HCT116 (cell line): ENCODE measurements at regions of chr3 and their contacts with region 1.

Region 1: GRCh38 chr3:155352900-155353490 is 59.5 kb upstream of the STRIT1 start:
- DNase-seq: peak; percentile 40
- ATAC-seq: peak; percentile 68
- H3K4me3 ChIP-seq: no peak overlapping the region
- H3K27ac ChIP-seq: no peak overlapping the region
- H3K4me1 ChIP-seq: no peaks in the 10 kb centered on the region
- H3K27me3 ChIP-seq: no peaks in the 10 kb centered on the region
- CTCF ChIP-seq: peak; percentile 32 to 65 (median 45); a peak in 3 of 6 replicates
- POLR2A ChIP-seq: no peak
- RAD21 ChIP-seq: peak; percentile 71

Region 2: GRCh38 chr3:153976891-153977554 is 1376.0 kb before region 1 on chr3:
- CTCF ChIA-PET with region 1: no interaction called
- POLR2A ChIA-PET with region 1: no interaction called
- RAD21 ChIA-PET with region 1: no interaction called
- intact Hi-C with region 1: no loop called
- DNase-seq: no peak
- ATAC-seq: no peak
- H3K4me3 ChIP-seq: no peak overlapping the region
- H3K27ac ChIP-seq: no peak overlapping the region
- H3K4me1 ChIP-seq: peaks cover 6 to 11% of the 10 kb centered on the region in 2 experiments; a peak in 3 of 4 replicates
- H3K27me3 ChIP-seq: no peaks in the 10 kb centered on the region
- CTCF ChIP-seq: no peak
- POLR2A ChIP-seq: no peak
- RAD21 ChIP-seq: no peak

Region 3: DNA sequence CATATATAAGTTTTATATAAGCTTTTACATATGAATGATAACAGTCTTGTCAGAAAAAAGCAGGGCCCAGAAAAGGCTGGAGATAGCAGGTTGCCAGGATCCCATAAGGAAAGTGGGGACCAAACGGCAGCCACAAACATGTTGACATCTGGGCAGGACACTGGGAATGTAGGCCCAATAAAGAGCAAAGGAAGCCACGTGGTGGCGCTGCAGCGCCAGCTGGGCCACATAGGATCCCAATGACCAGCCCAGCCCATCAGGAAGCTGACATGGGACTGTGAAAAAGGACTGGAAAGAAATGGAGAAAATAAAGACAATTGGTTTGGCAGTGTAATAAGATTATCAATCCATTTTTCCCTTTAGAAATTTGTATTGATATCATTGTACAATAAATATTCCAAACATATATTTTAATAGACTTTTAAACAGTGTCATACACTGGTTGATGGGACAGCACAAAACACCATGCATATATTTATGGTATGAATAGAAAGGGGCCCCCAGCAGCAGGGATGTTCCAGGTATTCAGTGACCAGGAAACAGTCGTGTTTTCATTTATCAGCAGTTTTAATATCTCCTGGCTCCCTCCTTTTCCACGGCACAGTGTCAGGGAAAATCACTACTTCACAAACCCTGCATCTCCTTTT is 29.5 kb after region 1 on chr3:
- CTCF ChIA-PET with region 1: interaction called, 4 read pairs
- POLR2A ChIA-PET with region 1: no interaction called
- RAD21 ChIA-PET with region 1: no interaction called
- intact Hi-C with region 1: loop called (anchors 2 kb)
- DNase-seq: peak; percentile 63
- ATAC-seq: peak; percentile 100
- H3K4me3 ChIP-seq: no peak overlapping the region
- H3K27ac ChIP-seq: no peak overlapping the region
- H3K4me1 ChIP-seq: no peaks in the 10 kb centered on the region
- H3K27me3 ChIP-seq: no peaks in the 10 kb centered on the region
- CTCF ChIP-seq: peak; percentile 73 to 81 (median 79)
- POLR2A ChIP-seq: no peak
- RAD21 ChIP-seq: peak; percentile 91

Region 4: DNA sequence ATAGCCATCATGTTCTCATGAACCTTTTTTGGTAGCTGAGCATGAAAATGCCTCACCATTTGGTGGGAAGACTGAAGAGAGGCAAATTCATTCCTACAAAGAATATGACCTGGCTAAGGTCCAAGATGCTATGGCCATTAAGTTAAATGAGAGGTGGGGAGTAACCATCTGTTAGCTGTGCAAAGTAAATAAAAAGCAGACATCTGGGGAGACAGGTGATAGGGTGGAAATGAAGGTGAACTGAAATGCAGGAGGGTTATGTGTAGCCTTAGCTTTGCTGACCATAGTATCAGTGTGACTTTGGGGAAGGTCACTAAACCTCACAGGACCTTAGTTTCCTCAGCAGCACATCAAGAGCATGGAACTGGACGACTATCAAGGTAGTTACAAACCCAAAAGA is 51.5 kb after region 1 on chr3:
- CTCF ChIA-PET with region 1: no interaction called
- POLR2A ChIA-PET with region 1: no interaction called
- RAD21 ChIA-PET with region 1: no interaction called
- intact Hi-C with region 1: no loop called
- DNase-seq: no peak
- ATAC-seq: no peak
- H3K4me3 ChIP-seq: no peak overlapping the region
- H3K27ac ChIP-seq: no peak overlapping the region
- H3K4me1 ChIP-seq: no peaks in the 10 kb centered on the region
- H3K27me3 ChIP-seq: no peaks in the 10 kb centered on the region
- CTCF ChIP-seq: no peak
- POLR2A ChIP-seq: no peak
- RAD21 ChIP-seq: no peak